Naive thymus-derived CD4-positive, alpha-beta T cell (primary cell): ENCODE measurements at regions of chr11 and their contacts with region 1.

Region 1: DNA sequence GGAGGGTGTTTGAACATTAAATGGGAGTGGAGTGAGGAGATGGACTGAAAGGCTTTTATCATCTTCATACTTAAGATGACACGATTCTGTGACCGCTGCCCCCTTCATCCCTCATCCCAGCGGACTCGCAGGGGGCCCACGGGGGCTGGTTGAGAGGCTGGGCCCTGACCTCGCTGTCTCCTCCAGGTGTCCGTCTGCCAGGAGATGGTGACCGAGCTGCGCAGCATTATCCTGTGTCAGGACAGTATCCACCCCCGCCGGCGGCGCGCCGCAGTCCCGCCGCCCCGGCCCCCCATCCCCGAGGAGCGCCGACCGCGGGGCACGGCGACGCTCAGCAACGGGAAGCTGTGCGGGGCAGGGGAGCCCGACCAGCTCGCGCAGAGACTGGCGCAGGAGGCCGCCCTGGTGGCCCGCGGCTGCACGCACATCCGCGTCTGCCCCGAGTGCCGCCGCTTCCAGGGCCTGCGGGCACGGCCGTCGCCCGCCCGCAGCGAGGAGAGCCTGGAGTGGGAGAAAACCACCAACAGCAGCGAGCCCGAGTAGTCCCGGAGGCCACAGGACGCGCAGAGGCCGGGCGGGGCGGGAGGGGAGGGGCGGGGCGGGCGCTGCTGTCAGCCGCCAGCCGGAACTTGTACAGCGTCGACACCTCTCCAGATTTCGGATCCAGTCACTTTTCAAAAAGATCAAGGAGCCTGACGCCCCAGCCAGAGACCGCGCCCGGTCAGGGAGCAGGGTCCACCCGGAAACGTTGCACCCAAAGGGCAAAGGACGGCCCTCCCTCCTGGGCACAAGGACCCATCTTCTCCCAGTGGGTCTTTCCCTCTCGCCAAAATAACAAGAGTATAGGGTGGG is 38.0 kb upstream of the TBCEL start:
- DNase-seq: peak; percentile 13 to 47 (median 40)
- ATAC-seq: peak; percentile 91
- H3K4me3 ChIP-seq: peak overlapping the region; percentile 18
- H3K4me3 Mint-ChIP-seq: peak overlapping the region; percentile 67 to 86 (median 78)
- H3K27ac ChIP-seq: no peak overlapping the region
- H3K27ac Mint-ChIP-seq: peak overlapping the region in 3 of 9 donors; percentile 23 to 73 (median 68)
- H3K4me1 ChIP-seq: peaks cover 0 to 5% of the 10 kb centered on the region in 2 donors
- H3K4me1 Mint-ChIP-seq: peaks cover 6 to 16% (median 13%) of the 10 kb centered on the region in 7 donors
- H3K27me3 ChIP-seq: peaks cover 0 to 2% of the 10 kb centered on the region in 2 donors
- H3K27me3 Mint-ChIP-seq: peaks cover 16 to 52% (median 18%) of the 10 kb centered on the region in 5 donors

Region 2: DNA sequence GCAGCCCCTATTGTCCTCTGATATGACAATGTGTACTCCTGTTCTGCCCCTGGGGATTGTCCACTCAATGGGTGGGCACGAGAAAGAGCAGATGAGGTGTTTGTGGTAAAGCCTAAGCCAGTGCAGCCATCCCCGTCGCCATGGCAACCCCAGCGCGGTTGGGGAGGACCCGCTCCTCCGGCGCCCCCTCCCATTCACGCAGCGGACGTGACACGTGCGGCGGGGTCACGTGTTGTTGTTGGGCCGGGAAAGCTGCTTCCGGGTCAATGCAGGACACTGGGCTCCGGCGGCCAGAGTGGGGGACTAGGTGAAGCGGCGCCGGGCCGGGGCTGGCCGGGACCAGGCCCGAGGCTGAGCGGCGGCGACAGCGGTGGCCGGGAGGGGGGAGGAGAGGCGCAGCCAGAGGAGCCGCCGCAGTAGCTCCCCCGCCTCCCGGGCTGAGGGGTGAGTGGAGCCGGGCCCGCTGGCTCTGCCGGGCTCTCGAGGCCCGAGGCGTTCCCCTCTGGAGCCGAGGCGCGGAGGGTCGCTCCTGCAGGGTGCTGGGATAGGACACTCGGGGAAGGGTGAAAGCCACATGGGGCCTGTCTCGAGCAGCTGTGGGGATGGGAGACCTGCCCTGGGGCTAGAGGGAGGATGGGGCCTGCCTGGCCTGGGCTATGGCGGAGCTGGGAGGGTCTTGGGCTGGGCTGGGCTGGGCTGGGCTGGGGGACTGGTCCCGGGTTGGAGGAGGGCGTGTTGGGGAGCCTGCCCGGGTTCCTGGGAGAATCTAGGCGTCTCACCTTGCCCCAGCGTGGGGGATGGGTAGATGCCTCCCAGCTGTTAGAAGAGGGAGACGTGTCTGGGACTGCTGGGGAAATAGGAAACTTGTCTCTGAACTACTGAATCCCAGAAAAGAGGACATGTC is 38.2 kb after region 1 on chr11 and contains the start of gene TBCEL:
- CTCF ChIA-PET with region 1: no interaction called
- POLR2A ChIA-PET with region 1: no interaction called
- intact Hi-C with region 1: loop called in 1 of 2 experiments (anchors 1 kb)
- DNase-seq: peak; percentile 74 to 89 (median 87)
- ATAC-seq: peak; percentile 91
- H3K4me3 ChIP-seq: peak within 1 kb of the TSS; percentile 53
- H3K4me3 Mint-ChIP-seq: peak within 1 kb of the TSS; percentile 72 to 92 (median 89)
- H3K27ac ChIP-seq: peak within 1 kb of the TSS; percentile 81
- H3K27ac Mint-ChIP-seq: peak within 1 kb of the TSS; percentile 79 to 95 (median 90)
- H3K4me1 ChIP-seq: peaks cover 7 to 10% of the 10 kb centered on the region in 2 donors
- H3K4me1 Mint-ChIP-seq: peaks cover 20 to 49% (median 32%) of the 10 kb centered on the region in 7 donors
- H3K27me3 ChIP-seq: no peaks in the 10 kb centered on the region
- H3K27me3 Mint-ChIP-seq: peaks cover 4 to 14% (median 6%) of the 10 kb centered on the region in 5 donors
- total RNA-seq, gene TBCEL: 14.7 to 30.0 (median 22.2) TPM

Region 3: GRCh38 chr11:121214861-121215260 is 228.9 kb after region 1 on chr11:
- CTCF ChIA-PET with region 1: no interaction called
- POLR2A ChIA-PET with region 1: no interaction called
- intact Hi-C with region 1: no loop called
- DNase-seq: no peak
- ATAC-seq: no peak
- H3K4me3 ChIP-seq: no peak overlapping the region
- H3K4me3 Mint-ChIP-seq: no peak overlapping the region
- H3K27ac ChIP-seq: no peak overlapping the region
- H3K27ac Mint-ChIP-seq: no peak overlapping the region
- H3K4me1 ChIP-seq: no peaks in the 10 kb centered on the region
- H3K4me1 Mint-ChIP-seq: no peaks in the 10 kb centered on the region
- H3K27me3 ChIP-seq: peaks cover 0 to 3% of the 10 kb centered on the region in 2 donors
- H3K27me3 Mint-ChIP-seq: peaks cover 33 to 54% (median 43%) of the 10 kb centered on the region in 5 donors